H1 (cell line): ENCODE measurements at regions of chr11 and their contacts with region 1.

Region 1: GRCh38 chr11:64742889-64743590 is 902 bp downstream of the RASGRP2 start:
- DNase-seq: peak in 1 of 2 experiments; percentile 94
- H3K4me3 ChIP-seq: peak overlapping the region; percentile 46 to 67 (median 57)
- H3K27ac ChIP-seq: no peak overlapping the region
- H3K4me1 ChIP-seq: peaks cover 4 to 33% (median 29%) of the 10 kb centered on the region in 4 experiments
- H3K27me3 ChIP-seq: peaks cover 0 to 32% (median 19%) of the 10 kb centered on the region in 4 experiments; a peak in 5 of 7 replicates
- CTCF ChIP-seq: peak in 2 of 3 experiments; percentile 74; a peak in 3 of 4 replicates
- EP300 ChIP-seq: no peak
- POLR2A ChIP-seq: 0 out of 3 replicates have a peak, but pooled peaks of 1 of the 2 experiments have one; percentile 14
- RAD21 ChIP-seq: peak; percentile 56 to 74

Region 2: DNA sequence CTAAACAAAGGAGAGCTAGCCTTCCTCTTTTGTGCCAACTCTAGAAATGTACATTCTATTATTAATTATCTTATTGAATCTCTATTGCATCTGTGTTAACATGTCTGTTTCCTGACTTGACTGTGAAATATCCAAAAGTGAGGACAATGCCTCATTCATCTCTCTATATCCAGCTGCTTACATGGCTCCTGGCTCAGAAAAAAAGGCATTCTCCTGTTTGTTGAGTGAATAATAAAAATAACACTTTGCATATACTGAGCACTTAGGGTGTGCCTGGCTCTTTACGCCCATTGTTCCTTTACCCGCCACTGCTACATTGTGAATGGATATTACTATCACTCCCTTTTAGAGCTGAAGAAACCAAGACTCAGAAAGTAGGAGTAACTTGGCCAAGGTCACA is 40.0 kb before region 1 on chr11:
- CTCF ChIA-PET with region 1: interaction called, 17 read pairs
- POLR2A ChIA-PET with region 1: interaction called, 3 read pairs
- DNase-seq: no peak
- H3K4me3 ChIP-seq: no peak overlapping the region
- H3K27ac ChIP-seq: no peak overlapping the region
- H3K4me1 ChIP-seq: peaks cover 0 to 3% (median 2%) of the 10 kb centered on the region in 4 experiments; a peak in 3 of 7 replicates
- H3K27me3 ChIP-seq: 0 out of 7 replicates have a peak, but pooled peaks cover 0 to 2% (median 0%) of the 10 kb centered on the region in 4 experiments
- CTCF ChIP-seq: no peak
- EP300 ChIP-seq: no peak
- POLR2A ChIP-seq: no peak
- RAD21 ChIP-seq: no peak

Region 3: GRCh38 chr11:64713031-64713780 is 29.8 kb before region 1 on chr11:
- CTCF ChIA-PET with region 1: interaction called, 30 read pairs
- POLR2A ChIA-PET with region 1: interaction called, 5 read pairs
- DNase-seq: no peak
- H3K4me3 ChIP-seq: peak overlapping the region; percentile 28 to 55 (median 42)
- H3K27ac ChIP-seq: no peak overlapping the region
- H3K4me1 ChIP-seq: peaks cover 12 to 28% (median 20%) of the 10 kb centered on the region in 4 experiments
- H3K27me3 ChIP-seq: peaks cover 12 to 49% (median 33%) of the 10 kb centered on the region in 4 experiments
- CTCF ChIP-seq: no peak
- EP300 ChIP-seq: no peak
- POLR2A ChIP-seq: no peak
- RAD21 ChIP-seq: no peak

Region 4: DNA sequence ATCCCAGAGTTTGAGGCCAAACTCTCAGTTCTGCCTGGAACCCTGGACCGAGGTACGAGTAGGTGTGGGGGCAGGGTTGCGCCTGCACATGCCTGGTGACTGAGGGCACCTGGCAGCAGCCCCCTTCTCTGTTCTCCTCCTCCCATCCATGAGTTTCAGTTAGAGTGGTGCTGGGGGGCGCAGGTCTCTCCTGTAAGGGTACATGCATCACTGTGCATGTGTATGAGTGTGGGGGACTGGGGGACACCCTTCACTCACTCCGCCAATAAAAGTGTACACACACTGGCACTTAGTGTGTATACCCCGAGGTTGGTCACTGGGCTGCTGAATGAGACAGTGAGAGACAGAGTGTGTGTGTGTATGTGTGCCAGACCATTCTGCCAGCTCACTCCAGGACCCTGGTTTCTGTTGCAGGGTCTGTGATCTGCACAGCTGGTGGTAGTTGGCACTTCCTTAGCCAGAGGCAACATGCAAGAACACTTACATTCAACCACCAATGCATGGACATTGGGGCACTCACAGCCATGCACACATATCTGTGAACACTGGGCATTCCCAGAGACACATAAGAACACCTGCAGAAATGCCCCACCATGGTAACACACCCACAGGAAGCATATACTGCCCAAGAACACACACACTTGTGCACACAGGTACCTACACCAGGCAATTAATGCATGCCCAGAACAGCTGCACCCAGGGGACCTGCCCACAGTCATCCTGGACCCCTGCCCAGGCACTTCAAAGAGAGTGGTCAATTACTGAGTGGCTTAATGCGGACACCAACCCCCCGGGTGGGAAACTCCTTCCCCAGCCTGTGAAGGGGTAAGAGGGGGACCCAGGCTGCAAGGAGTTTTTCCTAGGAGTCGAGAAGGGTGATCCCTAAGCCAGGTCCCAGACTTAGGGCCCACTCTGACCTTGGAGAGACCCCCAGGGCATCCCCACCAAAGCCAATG is 18.9 kb before region 1 on chr11:
- CTCF ChIA-PET with region 1: interaction called, 30 read pairs
- POLR2A ChIA-PET with region 1: interaction called, 48 read pairs
- DNase-seq: no peak
- H3K4me3 ChIP-seq: peak overlapping the region in 1 of 4 experiments; percentile 83; a peak in 4 of 8 replicates
- H3K27ac ChIP-seq: no peak overlapping the region
- H3K4me1 ChIP-seq: peaks cover 10 to 33% (median 25%) of the 10 kb centered on the region in 4 experiments
- H3K27me3 ChIP-seq: peaks cover 7 to 20% (median 16%) of the 10 kb centered on the region in 4 experiments
- CTCF ChIP-seq: no peak
- EP300 ChIP-seq: no peak
- POLR2A ChIP-seq: no peak
- RAD21 ChIP-seq: no peak

Region 5: GRCh38 chr11:64729851-64730382 is 13.1 kb before region 1 on chr11:
- CTCF ChIA-PET with region 1: interaction called, 14 read pairs
- POLR2A ChIA-PET with region 1: interaction called, 48 read pairs
- DNase-seq: peak in 1 of 2 experiments; percentile 91
- H3K4me3 ChIP-seq: peak overlapping the region; percentile 16 to 43 (median 29); a peak in 5 of 8 replicates
- H3K27ac ChIP-seq: no peak overlapping the region
- H3K4me1 ChIP-seq: peaks cover 4 to 32% (median 20%) of the 10 kb centered on the region in 4 experiments
- H3K27me3 ChIP-seq: no peaks in the 10 kb centered on the region; a peak in 2 of 7 replicates
- CTCF ChIP-seq: no peak
- EP300 ChIP-seq: no peak
- POLR2A ChIP-seq: peak in 1 of 2 experiments; percentile 46; a peak in 1 of 3 replicates
- RAD21 ChIP-seq: no peak

Region 6: GRCh38 chr11:64778508-64779346 is 35.7 kb after region 1 on chr11 and contains the start of gene SF1:
- CTCF ChIA-PET with region 1: interaction called, 376 read pairs
- POLR2A ChIA-PET with region 1: interaction called, 1,087 read pairs
- DNase-seq: peak; percentile 97 to 99
- H3K4me3 ChIP-seq: peak within 1 kb of the TSS; percentile 69 to 99 (median 95)
- H3K27ac ChIP-seq: peak within 1 kb of the TSS; percentile 93
- H3K4me1 ChIP-seq: peaks cover 2 to 6% (median 5%) of the 10 kb centered on the region in 4 experiments; a peak in 5 of 7 replicates
- H3K27me3 ChIP-seq: no peaks in the 10 kb centered on the region
- CTCF ChIP-seq: peak in 1 of 3 experiments; percentile 24; a peak in 1 of 4 replicates
- EP300 ChIP-seq: no peak
- POLR2A ChIP-seq: peak; percentile 93 to 94
- RAD21 ChIP-seq: no peak
- total RNA-seq, gene SF1: 353 and 365 TPM in 2 replicates